ENCODE measurements at regions of chr7 and their contacts with region 1.

Region 1: GRCh38 chr7:151123822-151124464 is 37.7 kb downstream of the AGAP3 start:
- DNase-seq: peak; percentile 98
- H3K4me3 ChIP-seq: no peak overlapping the region; a peak in 1 of 4 replicates
- H3K27ac ChIP-seq: no peak overlapping the region
- H3K4me1 ChIP-seq: no peaks in the 10 kb centered on the region; a peak in 1 of 4 replicates
- H3K27me3 ChIP-seq: no peaks in the 10 kb centered on the region
- CTCF ChIP-seq: peak; percentile 100
- EP300 ChIP-seq: no peak
- RAD21 ChIP-seq: peak; percentile 98

Region 2: DNA sequence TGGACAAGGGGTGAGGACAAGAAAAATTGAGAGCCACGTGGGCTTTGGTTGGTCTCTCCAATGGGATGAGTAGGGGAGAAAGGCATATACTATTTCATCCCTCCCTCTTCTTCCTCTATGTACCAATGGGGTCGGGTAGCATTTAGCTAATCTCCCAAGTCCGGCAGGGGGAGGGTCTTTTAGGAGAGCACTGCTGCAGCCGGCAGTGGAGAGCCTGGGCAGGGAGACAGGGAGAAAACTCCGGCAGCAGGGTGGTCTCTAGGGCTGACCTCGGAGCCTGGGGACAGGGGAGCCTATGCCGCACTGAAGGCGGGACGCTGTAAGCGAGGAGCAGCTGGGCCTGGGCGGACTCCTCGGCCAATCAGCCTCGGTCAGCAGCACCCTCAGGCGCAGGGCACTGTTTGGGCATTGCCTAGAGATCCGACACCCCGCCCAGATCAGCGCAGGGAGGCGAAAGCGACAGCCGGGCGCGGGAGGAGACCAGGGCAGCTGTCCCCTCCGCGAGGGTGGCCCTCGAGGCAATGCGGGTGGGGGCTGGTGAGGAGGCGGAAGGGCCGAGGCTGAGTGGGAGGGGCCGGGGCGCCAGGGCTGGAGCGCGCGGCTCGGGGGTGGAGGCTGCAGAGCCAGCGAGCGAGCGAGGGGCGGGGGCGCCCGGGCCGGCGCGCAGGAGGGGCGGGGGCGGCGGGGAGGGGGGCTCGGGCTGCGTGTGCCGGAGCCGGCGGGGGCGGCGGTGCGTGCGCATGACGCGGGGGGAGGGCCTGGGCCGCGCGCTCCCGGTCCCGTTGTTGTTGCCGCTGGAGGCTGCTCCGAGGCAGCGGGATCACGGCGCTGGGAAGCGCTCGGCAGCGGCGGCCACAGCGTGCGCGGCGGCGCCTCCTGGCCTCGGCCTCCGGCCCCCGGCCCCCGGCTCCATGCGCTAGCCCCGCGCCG is 38.0 kb before region 1 on chr7 and contains the start of gene AGAP3:
- CTCF ChIA-PET with region 1: interaction called, 12 read pairs
- POLR2A ChIA-PET with region 1: no interaction called
- DNase-seq: peak; percentile 99
- H3K4me3 ChIP-seq: peak within 1 kb of the TSS; percentile 90 to 100
- H3K27ac ChIP-seq: peak within 1 kb of the TSS; percentile 64 to 94
- H3K4me1 ChIP-seq: peaks cover 34 to 58% of the 10 kb centered on the region in 2 experiments
- H3K27me3 ChIP-seq: no peaks in the 10 kb centered on the region
- CTCF ChIP-seq: no peak
- EP300 ChIP-seq: peak in 1 of 2 experiments; percentile 25; a peak in 1 of 4 replicates
- RAD21 ChIP-seq: no peak
- polyA plus RNA-seq, gene AGAP3: 108 and 126 TPM in 2 replicates

Region 3: DNA sequence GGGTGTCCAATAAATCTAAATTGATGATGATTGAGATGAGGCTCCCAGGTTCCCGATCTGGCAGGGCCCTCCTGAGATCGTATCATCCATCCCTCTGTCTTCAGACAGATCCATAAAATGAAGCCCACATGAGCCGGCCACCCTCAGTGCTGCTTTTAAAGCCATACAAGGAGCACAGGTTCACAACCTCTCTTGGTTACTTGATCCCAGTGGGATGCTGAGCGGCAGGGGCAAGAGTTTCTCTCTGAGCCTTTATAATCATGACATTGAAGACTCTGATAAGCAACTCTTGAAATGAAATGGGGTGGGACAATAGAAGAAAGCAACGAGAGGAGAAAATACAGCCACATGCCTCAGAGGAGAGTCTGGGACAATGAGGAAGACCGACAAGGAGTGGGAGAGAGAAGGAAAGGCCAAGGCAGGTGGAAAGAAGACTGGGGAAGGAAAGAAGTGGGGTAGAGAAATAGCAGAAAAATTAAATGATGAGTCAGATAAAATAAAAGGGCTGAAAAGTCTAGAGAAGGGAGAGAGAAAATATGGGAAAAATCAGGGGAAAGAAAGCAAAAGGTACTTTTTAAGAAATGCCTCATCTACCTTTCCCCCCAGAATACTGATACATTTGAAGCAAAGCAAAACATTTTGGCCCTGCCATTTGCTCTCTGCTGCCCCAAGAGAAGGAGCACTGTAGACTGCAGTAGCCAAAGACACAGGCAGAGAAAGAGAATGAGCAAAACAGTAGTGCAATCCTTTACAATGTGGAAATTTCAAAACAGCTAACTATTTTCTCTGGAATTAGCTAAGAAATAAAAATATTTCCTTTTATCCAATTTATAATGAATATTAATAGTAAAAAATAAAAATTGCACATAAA is 28.9 kb after region 1 on chr7:
- CTCF ChIA-PET with region 1: interaction called, 28 read pairs
- POLR2A ChIA-PET with region 1: no interaction called
- DNase-seq: no peak
- H3K4me3 ChIP-seq: no peak overlapping the region
- H3K27ac ChIP-seq: no peak overlapping the region
- H3K4me1 ChIP-seq: no peaks in the 10 kb centered on the region
- H3K27me3 ChIP-seq: peaks cover 37% of the 10 kb centered on the region; the same call in 1 of the 2 replicates
- CTCF ChIP-seq: peak; percentile 31; the same call in 1 of the 2 replicates
- EP300 ChIP-seq: no peak
- RAD21 ChIP-seq: no peak

Region 4: DNA sequence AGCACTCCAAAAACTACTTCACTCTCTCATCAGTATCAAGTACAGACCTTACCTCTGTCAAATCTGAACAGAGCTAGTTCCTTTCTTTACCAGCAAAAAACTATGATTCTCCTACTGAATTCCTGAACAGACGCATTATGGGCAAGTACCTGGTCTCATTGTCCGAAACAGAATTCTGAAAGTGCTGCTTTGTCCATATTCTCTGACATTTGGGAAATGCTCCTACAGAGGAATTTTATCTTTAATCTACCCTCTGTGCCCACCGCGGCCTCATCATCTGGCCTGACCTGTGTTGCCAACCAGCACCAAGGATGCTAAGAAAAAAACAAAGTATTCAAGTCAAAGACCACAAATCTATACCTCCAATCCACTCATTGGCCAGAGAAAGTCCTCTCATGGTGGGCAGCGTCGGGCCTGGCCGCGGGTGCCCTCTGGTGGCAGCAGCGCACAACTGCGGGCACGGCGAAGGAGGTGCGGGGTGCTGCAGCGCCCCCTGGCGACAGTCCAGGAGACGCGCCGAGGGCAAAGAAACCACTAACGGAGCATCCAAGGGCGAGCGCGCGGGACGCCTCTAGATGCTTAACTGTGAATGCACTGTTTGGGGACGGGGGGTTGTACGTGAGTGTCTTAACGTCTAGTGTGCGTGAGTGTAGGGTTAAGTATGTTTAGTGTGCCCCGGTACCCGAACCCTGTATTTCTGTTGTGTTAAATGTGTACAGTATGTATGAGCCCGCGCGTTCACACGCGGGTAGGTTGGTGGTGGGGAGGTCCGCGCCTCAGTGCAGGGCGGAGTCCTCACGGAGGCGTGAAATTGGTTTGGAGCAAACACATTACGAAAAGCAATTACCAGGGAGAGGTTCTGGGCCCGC is 48.6 kb after region 1 on chr7:
- CTCF ChIA-PET with region 1: interaction called, 243 read pairs
- POLR2A ChIA-PET with region 1: no interaction called
- DNase-seq: peak; percentile 97
- H3K4me3 ChIP-seq: peak overlapping the region in 1 of 2 experiments; percentile 48; a peak in 1 of 4 replicates
- H3K27ac ChIP-seq: no peak overlapping the region
- H3K4me1 ChIP-seq: peaks cover 0 to 4% of the 10 kb centered on the region in 2 experiments; a peak in 1 of 4 replicates
- H3K27me3 ChIP-seq: peaks cover 60% of the 10 kb centered on the region
- CTCF ChIP-seq: peak; percentile 100
- EP300 ChIP-seq: no peak
- RAD21 ChIP-seq: peak; percentile 97

Region 5: DNA sequence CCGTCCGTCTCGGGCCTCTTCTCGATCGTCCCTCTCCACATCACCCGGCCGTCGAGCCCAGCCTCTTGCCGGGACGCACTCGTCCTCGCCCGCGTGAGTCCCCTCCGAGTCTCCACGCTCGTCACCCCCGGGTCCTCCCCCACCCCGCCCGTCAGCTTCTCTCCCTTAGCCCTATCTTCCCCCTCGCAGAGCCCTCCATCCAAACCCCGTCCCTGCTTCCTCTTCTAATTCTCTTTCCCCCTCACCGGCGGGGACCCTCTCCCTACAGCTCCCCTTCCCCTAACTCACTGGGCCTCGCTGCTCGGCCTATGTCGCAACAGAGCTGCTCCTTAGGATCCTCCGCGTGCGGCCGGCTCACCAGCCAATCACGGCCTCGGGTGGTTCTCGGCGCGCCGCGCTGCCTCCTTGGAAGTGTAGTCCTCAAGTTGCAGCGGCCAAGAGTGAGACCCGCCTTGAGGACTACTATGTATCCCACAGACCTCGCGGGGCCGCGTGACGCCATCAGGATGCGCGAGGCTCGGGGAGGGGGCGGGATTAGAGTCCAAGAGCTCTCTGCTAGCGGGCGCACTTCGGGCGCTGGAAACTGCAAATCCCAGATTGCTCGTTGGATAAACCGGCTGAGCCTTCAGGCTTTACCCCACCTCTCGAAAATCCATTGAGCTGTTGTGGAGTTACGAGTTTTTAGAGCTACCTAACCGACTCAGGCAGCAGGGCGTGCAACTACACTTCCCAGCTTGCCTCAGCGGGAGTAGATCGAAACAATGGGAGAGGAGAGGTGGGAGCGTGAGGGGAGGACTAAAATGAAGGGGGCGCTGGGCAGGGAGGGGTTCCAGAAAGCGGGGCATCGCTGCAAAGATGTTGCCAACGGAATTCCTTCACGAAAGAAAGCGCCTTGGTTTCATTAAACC is 103.2 kb after region 1 on chr7 and contains the start of gene ABCF2:
- CTCF ChIA-PET with region 1: interaction called, 19 read pairs
- POLR2A ChIA-PET with region 1: no interaction called
- DNase-seq: peak; percentile 99
- H3K4me3 ChIP-seq: peak within 1 kb of the TSS; percentile 80 to 97
- H3K27ac ChIP-seq: peak within 1 kb of the TSS; percentile 80 to 96
- H3K4me1 ChIP-seq: peaks cover 10 to 26% of the 10 kb centered on the region in 2 experiments
- H3K27me3 ChIP-seq: no peaks in the 10 kb centered on the region
- CTCF ChIP-seq: peak; percentile 32; the same call in 1 of the 2 replicates
- EP300 ChIP-seq: no peak
- RAD21 ChIP-seq: no peak
- polyA plus RNA-seq, gene ABCF2: 75.4 and 102 TPM in 2 replicates

Region 6: GRCh38 chr7:151506901-151507382 is 383.0 kb after region 1 on chr7:
- CTCF ChIA-PET with region 1: no interaction called
- POLR2A ChIA-PET with region 1: no interaction called
- DNase-seq: peak; percentile 45
- H3K4me3 ChIP-seq: no peak overlapping the region
- H3K27ac ChIP-seq: no peak overlapping the region
- H3K4me1 ChIP-seq: peaks cover 13 to 17% of the 10 kb centered on the region in 2 experiments; a peak in 3 of 4 replicates
- H3K27me3 ChIP-seq: no peaks in the 10 kb centered on the region
- CTCF ChIP-seq: peak; percentile 47
- EP300 ChIP-seq: no peak
- RAD21 ChIP-seq: no peak

Measured in SK-N-SH (cell line).